ENCODE measurements at regions of chr12 and their contacts with region 1.

Region 1: DNA sequence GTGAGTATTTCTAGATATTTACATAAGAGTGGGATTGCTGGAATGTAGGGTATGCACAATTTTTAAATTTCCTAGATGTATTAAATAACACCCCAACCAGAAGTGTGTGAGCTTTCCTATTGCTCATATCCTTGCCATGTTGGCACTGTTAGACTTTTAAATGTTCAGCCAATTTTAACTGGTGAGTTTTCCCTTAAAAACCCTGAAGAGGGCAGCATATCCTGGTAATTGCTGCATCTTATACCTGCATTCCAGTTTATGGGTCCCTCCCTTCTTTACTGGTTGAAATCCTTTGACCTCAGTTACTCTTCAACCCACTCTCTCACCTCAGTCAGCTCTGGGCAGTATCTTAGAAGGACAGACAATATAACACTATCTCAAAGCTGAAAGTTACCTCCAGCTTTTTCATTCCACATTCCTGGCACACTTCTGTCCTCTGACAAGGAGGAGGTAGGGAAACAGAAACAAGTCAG is 270.6 kb downstream of the PAWR start:
- DNase-seq: peak; percentile 93
- H3K4me3 ChIP-seq: no peak overlapping the region
- H3K27ac ChIP-seq: peak overlapping the region; percentile 97
- H3K4me1 ChIP-seq: peaks cover 54% of the 10 kb centered on the region
- H3K27me3 ChIP-seq: no peaks in the 10 kb centered on the region
- CTCF ChIP-seq: peak; percentile 47 to 63
- POLR2A ChIP-seq: peak; percentile 9

Region 2: DNA sequence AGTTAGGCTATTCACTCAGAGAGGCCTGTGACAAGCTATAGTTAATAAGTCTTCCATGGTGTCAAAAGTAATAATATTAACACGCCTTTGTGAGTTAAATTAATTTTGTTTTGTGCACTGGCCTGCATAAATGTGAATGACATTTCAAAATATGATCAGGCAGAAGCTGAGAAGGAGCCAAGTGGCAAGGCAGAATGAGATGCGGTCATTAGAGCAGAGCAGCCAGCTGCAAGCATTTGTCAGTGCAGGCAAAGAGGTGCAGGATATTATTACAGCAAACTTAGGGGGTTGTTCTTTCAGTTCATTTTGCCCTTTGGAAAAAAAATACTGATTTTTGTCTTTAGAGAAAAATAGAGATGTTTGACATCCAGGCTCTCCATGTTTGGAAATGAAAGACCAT is 94.0 kb before region 1 on chr12:
- CTCF ChIA-PET with region 1: no interaction called
- POLR2A ChIA-PET with region 1: no interaction called
- dilution Hi-C with region 1: no loop called
- intact Hi-C with region 1: no loop called
- DNase-seq: no peak
- H3K4me3 ChIP-seq: no peak overlapping the region
- H3K27ac ChIP-seq: no peak overlapping the region
- H3K4me1 ChIP-seq: peaks cover 5% of the 10 kb centered on the region
- H3K27me3 ChIP-seq: no peaks in the 10 kb centered on the region
- CTCF ChIP-seq: no peak
- POLR2A ChIP-seq: no peak

Region 3: DNA sequence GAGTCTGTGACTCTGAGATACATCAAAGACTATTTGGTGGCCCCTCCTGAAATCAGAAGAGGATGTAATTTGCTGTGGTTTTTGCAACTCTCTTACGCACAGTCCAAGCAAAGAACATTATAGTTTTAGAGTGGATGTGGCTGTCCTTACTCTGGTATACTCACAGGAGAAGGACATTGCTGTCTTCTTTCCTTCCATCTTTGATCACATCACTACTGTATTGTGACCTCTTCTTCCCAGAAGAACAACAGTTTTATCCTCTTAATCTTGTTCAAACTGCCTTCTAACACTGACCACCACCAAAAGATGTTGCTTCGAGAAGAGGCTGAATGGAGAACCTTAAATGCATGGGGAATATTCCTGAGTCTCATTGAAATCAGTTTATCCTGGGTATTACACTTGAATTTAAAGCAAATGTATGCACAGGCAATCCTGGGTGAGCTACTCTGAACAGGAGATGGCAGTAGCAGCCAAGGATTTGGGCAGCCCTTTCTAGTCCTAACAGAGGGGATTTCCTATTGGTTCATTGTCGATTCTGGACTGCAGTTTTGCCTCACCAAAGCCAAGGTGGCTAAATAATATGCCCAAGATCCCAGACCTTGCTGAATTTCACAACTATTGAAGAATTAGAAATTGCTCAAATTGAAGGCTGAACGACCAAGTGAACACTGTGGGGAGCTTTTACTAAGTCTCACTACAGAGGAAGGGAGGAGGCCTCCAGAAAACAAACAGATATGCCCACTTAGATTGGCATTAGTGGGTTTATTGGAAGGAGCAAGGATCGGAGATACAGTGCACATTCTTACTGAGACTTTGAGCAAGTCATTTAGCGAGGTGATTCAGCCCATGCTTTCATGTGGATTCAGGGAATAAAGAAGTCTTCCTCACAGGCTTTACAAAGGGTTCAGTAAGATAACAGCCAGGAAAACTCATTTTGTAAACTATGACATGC is 12.2 kb before region 1 on chr12:
- CTCF ChIA-PET with region 1: interaction called, 20 read pairs
- POLR2A ChIA-PET with region 1: no interaction called
- dilution Hi-C with region 1: no loop called
- intact Hi-C with region 1: no loop called
- DNase-seq: peak; percentile 88
- H3K4me3 ChIP-seq: no peak overlapping the region
- H3K27ac ChIP-seq: peak overlapping the region; percentile 25
- H3K4me1 ChIP-seq: peaks cover 9% of the 10 kb centered on the region
- H3K27me3 ChIP-seq: no peaks in the 10 kb centered on the region
- CTCF ChIP-seq: peak; percentile 72 to 86
- POLR2A ChIP-seq: no peak

Region 4: GRCh38 chr12:79451978-79452377 is 31.8 kb after region 1 on chr12:
- CTCF ChIA-PET with region 1: interaction called, 15 read pairs
- POLR2A ChIA-PET with region 1: interaction called, 3 read pairs
- dilution Hi-C with region 1: no loop called
- intact Hi-C with region 1: loop called (anchors 1 kb)
- DNase-seq: peak; percentile 99
- H3K4me3 ChIP-seq: no peak overlapping the region
- H3K27ac ChIP-seq: peak overlapping the region; percentile 79
- H3K4me1 ChIP-seq: peaks cover 44% of the 10 kb centered on the region
- H3K27me3 ChIP-seq: no peaks in the 10 kb centered on the region
- CTCF ChIP-seq: no peak
- POLR2A ChIP-seq: no peak

Region 5: DNA sequence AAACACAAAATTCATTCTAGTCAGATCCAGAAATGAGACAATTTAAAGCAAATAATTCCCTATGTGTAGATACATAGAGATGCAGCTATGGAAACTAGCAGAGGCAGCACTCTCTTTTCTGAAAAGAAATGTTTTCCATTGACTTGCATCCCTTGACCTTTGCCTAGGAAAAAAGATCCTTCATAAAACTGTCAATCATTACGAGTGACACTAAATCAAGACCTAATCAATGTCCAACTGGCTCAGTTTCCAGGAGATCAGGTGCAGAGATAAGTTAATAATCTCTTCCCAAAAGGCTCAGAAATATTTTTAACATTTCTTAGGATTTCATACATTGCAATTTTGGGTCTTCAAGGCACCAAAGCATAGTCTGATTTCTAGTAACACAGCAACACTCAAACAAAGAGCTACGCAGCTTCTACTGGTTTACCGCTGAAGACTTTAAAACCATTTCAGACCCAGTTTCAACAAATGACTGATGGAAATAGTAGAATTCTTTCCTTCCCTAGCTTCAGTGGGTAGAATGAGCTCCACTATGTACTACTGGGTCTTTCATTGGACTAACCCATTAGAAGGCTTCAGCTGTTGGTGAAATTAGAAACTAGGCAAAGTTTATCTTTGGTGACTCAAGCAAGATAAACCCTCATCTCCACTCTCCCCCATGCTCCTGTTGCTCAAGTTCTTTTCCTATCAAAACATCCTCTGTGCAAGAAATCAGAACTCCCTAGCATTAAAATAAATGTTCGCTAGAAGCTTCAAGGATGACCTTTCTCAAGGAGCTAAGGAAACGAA is 111.1 kb after region 1 on chr12:
- CTCF ChIA-PET with region 1: interaction called, 13 read pairs
- POLR2A ChIA-PET with region 1: no interaction called
- dilution Hi-C with region 1: no loop called
- intact Hi-C with region 1: no loop called
- DNase-seq: no peak
- H3K4me3 ChIP-seq: no peak overlapping the region
- H3K27ac ChIP-seq: no peak overlapping the region
- H3K4me1 ChIP-seq: peaks cover 5% of the 10 kb centered on the region
- H3K27me3 ChIP-seq: no peaks in the 10 kb centered on the region
- CTCF ChIP-seq: no peak
- POLR2A ChIP-seq: no peak

Region 6: DNA sequence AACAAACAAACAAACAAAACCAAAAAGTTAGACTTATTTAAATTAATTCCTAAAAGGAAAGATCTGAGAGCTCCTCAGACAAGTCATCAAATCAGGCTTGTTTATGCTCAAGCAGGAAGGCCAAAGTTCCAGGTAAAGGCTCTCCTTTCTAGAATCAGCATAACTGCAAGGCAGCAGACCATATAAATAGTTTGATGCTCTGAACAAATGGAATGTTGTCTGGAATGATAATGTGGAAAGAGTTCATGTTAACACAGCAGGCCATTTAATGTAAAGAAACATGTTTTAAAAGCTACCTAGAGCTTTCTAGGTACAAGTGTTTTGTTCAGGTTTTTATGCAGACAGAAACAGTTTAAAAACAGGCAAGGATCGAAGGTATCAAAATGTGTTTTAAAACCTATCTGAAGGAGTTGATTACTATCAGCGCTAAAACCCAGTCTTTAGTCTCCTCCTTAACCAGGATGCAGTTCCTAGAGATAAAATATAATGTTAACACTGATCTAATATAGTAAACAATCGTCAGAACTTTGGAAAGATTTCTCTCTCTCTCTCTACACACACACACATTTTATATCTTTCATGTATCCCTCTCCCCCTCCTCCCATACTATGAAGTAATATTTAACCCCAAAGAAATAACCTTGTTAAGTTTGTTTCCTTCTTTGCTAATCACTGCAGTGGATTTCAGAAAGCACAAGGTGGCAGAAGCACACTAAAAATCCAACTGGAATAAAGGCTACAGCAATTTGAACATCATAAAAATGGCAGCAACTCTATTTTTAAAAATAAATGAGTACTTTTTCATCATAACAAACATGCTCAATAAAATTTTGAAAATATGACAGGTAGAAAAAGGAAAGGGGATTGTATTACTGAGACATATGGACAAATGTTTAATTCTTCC is 135.1 kb after region 1 on chr12:
- CTCF ChIA-PET with region 1: interaction called, 23 read pairs
- POLR2A ChIA-PET with region 1: no interaction called
- dilution Hi-C with region 1: no loop called
- intact Hi-C with region 1: no loop called
- DNase-seq: peak; percentile 79
- H3K4me3 ChIP-seq: no peak overlapping the region
- H3K27ac ChIP-seq: no peak overlapping the region
- H3K4me1 ChIP-seq: peaks cover 56% of the 10 kb centered on the region
- H3K27me3 ChIP-seq: no peaks in the 10 kb centered on the region
- CTCF ChIP-seq: peak; percentile 43 to 48
- POLR2A ChIP-seq: no peak

Region 7: DNA sequence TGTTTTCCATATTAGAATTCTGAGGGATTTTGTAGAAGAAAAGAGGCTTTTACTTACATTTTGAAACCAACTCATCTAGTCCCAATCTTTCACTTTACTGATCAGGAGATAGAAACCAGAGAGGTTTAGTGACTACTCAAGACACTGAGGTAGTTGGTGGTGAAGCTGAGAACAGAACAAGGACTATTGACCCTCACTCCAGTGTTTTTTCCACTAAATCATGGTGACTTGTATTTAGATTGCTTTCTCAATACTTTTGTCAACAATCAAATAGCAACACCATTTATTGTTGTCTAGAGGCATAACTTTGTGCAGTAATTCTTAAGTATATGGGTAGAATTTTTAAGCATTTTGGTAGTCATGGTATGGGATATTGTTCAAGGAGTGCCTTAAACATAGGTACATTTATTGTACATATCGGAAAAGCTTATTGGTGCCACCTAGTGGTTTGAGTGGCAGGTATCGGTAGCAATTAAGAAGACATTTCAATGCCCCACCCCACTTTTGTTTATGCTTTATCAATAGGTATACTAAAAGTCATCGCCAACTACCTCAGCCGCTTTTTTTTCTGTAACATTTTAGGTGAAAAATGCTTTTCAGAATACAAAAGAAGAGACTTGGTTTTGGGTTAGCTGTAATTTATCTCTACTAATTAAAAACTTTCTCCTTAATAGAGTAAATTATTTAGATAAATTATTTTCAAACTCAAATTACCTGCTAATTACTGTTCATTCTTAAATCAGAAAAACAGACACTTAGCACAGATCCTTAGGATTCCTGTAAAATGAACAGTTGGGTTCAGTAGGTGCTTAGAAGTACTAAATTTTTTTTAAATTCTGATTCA is 317.9 kb after region 1 on chr12:
- CTCF ChIA-PET with region 1: interaction called, 12 read pairs
- POLR2A ChIA-PET with region 1: no interaction called
- dilution Hi-C with region 1: no loop called
- intact Hi-C with region 1: loop called (anchors 1 kb)
- DNase-seq: peak; percentile 80
- H3K4me3 ChIP-seq: no peak overlapping the region
- H3K27ac ChIP-seq: no peak overlapping the region
- H3K4me1 ChIP-seq: no peaks in the 10 kb centered on the region
- H3K27me3 ChIP-seq: no peaks in the 10 kb centered on the region
- CTCF ChIP-seq: peak; percentile 48 to 49
- POLR2A ChIP-seq: no peak

Region 8: DNA sequence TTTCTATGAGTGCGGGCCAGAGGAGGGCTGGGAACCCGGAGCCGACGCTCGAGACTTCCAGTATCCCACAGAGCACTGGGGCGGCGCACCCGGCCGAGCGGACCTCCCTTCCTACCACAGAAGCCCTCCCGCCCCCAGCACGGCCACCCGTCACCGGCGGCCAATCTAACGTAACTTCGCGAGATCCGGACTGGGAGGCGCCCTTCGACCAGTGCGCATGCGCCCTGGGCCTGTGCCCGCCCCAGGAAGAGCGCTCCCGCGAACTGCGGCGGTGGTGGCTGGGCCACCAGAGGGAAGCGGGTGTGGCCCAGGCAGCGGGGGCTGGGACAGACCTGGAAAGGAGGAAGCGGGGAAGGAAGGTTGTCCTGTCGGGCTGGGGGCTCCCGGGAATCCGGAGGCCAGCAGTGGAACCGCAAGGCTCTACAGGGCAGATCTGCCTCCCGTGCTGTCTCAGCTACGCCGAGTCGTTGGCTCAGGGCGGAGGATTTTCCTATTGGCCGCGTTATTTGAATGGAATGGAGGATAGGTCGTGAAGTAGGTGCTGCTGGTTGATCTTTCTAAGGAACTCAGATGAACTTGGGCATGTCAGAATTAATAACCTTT is 514.9 kb after region 1 on chr12 and contains the start of gene PPP1R12A:
- CTCF ChIA-PET with region 1: no interaction called
- POLR2A ChIA-PET with region 1: no interaction called
- dilution Hi-C with region 1: no loop called
- intact Hi-C with region 1: loop called (anchors 2 kb)
- DNase-seq: peak; percentile 99
- H3K4me3 ChIP-seq: peak within 1 kb of the TSS; percentile 69 to 97 (median 84)
- H3K27ac ChIP-seq: peak within 1 kb of the TSS; percentile 82
- H3K4me1 ChIP-seq: peaks cover 22% of the 10 kb centered on the region
- H3K27me3 ChIP-seq: no peaks in the 10 kb centered on the region
- CTCF ChIP-seq: peak in 1 of 2 donors; percentile 14
- POLR2A ChIP-seq: peak; percentile 92
- total RNA-seq, gene PPP1R12A: 83.9 and 86.8 TPM in 2 replicates